BJ (cell line): ENCODE measurements at regions of chr2 and their contacts with region 1.

Region 1: DNA sequence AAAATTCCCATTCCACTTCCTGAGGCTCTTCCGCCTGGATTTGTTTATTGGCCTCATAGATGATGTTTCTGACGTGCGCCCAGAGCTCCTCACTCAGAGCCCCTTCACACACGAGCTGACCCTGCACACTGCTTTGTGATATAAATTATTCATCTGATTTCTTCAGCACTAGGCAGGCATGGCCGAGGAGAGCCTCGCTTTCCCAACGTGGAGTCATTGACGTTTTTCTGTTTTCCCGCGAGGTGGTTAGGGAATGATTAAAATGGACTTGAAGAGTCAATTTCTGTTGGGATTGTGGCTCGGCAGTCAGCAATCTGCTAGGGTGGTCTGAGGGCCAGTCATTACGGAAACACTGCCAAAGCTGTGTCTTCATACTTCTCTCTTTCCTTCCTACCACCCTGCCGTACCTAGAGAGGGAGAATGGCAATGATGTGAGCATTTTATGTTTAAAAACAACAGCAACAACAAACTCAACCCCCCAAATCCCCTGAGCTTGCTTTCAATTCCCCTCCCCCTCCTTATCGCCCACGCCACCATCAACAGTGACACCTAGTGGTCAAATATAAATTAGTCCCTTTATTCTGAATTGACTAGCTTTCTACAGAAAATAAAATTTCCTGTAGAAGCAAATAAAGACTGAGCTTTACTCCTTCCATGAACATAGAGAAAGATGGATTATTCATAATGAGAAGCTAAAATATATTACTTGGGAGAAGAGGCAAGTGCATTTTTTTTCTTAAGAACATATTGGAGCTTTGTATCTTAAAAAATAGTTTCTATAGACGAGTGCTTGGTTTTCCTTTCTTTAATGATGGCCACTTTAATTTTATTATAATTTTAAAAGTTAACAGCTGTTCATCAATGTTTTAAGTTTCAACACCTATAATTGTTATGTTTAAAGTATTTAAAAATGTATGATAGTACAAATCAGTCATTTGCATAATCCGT is 285.1 kb downstream of the MTX2 start:
- DNase-seq: no peak
- H3K4me3 ChIP-seq: peak overlapping the region; percentile 17; the same call in 1 of the 2 replicates
- H3K27me3 ChIP-seq: peaks cover 5% of the 10 kb centered on the region
- CTCF ChIP-seq: peak; percentile 71

Region 2: DNA sequence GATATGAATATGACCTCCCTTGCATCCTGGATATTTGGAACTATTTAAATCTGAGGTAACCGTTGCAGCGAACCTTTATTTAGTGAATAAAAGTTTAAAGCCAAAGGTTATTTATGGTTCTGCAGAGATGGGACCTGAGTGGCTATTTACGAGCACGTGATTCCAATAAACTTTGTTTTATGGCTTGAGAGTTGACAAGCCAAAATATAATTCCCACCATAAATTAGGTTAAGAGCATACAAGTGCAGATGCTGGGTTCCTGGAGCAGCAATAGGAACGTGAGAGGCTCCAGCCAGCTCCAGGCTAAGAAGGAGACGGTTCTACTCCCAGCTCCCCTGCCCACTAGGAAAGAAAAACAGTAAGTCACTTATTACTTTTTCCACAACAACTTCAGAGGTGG is 408.3 kb before region 1 on chr2:
- CTCF ChIA-PET with region 1: interaction called, 92 read pairs
- POLR2A ChIA-PET with region 1: no interaction called
- DNase-seq: no peak
- H3K4me3 ChIP-seq: no peak overlapping the region
- H3K27me3 ChIP-seq: peaks cover 55% of the 10 kb centered on the region
- CTCF ChIP-seq: no peak

Region 3: DNA sequence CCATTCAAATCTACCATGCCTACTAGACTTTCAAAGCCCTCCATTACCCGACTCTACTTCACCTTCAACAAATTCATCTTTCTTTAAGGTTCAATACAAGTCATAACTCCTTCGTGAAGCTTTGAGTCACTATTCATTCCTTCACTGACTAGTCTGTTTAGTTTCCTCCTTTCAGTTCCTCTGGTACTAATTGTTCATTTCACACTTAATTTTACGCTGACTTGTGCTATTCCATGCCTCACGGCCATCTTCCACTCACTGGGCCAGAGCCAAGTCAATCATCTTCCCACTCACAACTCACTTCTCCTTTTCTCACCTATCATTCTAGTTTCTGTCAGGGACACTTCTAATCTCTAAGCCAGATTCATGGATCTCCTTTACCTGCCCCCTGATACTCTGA is 148.9 kb before region 1 on chr2:
- CTCF ChIA-PET with region 1: no interaction called
- POLR2A ChIA-PET with region 1: no interaction called
- DNase-seq: no peak
- H3K4me3 ChIP-seq: no peak overlapping the region
- H3K27me3 ChIP-seq: no peaks in the 10 kb centered on the region
- CTCF ChIP-seq: no peak

Region 4: GRCh38 chr2:176565641-176566323 is 11.4 kb after region 1 on chr2:
- CTCF ChIA-PET with region 1: interaction called, 24 read pairs
- POLR2A ChIA-PET with region 1: no interaction called
- DNase-seq: no peak
- H3K4me3 ChIP-seq: no peak overlapping the region
- H3K27me3 ChIP-seq: no peaks in the 10 kb centered on the region; the same call in 1 of the 2 replicates
- CTCF ChIP-seq: no peak

Region 5: GRCh38 chr2:176638167-176639015 is 84.0 kb after region 1 on chr2:
- CTCF ChIA-PET with region 1: interaction called, 13 read pairs
- POLR2A ChIA-PET with region 1: no interaction called
- DNase-seq: no peak
- H3K4me3 ChIP-seq: peak overlapping the region; percentile 59
- H3K27me3 ChIP-seq: peaks cover 1% of the 10 kb centered on the region
- CTCF ChIP-seq: peak; percentile 70